ENCODE measurements at regions of chr6 and their contacts with region 1.

Region 1: GRCh38 chr6:87701676-87702588 is at the start of gene AKIRIN2:
- DNase-seq: peak; percentile 67 to 98
- ATAC-seq: peak; percentile 72 to 85
- H3K4me3 ChIP-seq: peak within 1 kb of the TSS; percentile 80
- H3K27ac ChIP-seq: peak within 1 kb of the TSS; percentile 94 to 100
- H3K4me1 ChIP-seq: peaks cover 53% of the 10 kb centered on the region
- CTCF ChIP-seq: no peak
- EP300 ChIP-seq: no peak
- POLR2A ChIP-seq: peak; percentile 78
- RAD21 ChIP-seq: no peak
- polyA plus RNA-seq, gene AKIRIN2: 23.7 and 28.8 TPM in 2 replicates

Region 2: GRCh38 chr6:87421575-87421974 is 280.4 kb before region 1 on chr6:
- CTCF ChIA-PET with region 1: no interaction called
- POLR2A ChIA-PET with region 1: no interaction called
- DNase-seq: no peak
- ATAC-seq: no peak
- H3K4me3 ChIP-seq: no peak overlapping the region
- H3K27ac ChIP-seq: no peak overlapping the region
- H3K4me1 ChIP-seq: no peaks in the 10 kb centered on the region
- CTCF ChIP-seq: no peak
- EP300 ChIP-seq: no peak
- POLR2A ChIP-seq: no peak
- RAD21 ChIP-seq: no peak

Region 3: DNA sequence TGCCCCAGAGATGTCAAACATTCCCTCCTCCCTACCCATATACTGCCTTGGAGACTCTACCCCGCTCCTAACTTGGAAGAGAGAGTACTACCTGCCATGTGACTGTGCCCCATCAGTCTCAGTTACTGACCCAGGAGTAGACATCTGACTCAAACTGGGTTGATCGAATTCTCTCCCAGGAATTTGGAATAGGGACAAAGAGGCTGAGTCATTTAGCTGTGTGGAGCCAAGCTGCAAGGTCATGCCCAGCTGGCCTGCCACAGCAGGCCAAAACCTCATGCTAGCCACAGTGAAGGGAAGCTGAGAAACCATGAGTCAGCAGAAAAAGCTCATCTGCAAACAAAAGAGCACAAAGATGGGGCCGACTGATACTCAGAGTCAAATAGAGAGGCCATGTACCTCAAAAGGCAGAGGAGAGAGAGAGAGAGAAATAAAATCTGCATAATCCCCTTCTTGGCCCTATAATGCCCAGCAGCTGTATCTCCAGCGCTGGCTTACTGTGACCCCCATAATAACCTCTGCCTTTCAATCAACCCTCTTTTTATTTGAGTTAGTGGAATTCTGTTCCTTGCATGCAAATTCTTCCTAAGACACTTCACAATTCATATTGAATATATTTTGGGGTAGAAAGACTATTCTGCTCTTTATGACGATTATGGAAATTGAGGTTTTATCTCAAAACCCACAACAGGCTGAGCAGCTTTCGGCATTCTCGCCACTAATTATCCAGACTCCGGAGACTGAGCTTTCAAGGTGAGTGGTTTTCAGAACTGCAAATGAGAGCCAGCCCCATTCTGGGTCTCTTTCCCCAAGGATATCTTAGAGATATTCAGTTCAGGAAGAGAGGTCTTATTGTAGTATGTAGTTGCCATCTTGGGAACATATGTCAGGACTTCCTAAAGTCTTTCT is 21.5 kb after region 1 on chr6:
- CTCF ChIA-PET with region 1: interaction called, 5 read pairs
- POLR2A ChIA-PET with region 1: interaction called, 14 read pairs
- DNase-seq: peak; percentile 78 to 94
- ATAC-seq: peak; percentile 93 to 97
- H3K4me3 ChIP-seq: no peak overlapping the region
- H3K27ac ChIP-seq: peak overlapping the region; percentile 93
- H3K4me1 ChIP-seq: peaks cover 61% of the 10 kb centered on the region
- CTCF ChIP-seq: no peak
- EP300 ChIP-seq: peak; percentile 72 to 83; a peak in 2 of 5 replicates
- POLR2A ChIP-seq: no peak
- RAD21 ChIP-seq: peak in 1 of 2 experiments; percentile 45; a peak in 3 of 5 replicates

Region 4: GRCh38 chr6:87755708-87756671 is 54.1 kb after region 1 on chr6:
- CTCF ChIA-PET with region 1: no interaction called
- POLR2A ChIA-PET with region 1: no interaction called
- DNase-seq: no peak
- ATAC-seq: peak in 1 of 2 experiments; percentile 52; a peak in 2 of 6 replicates
- H3K4me3 ChIP-seq: no peak overlapping the region
- H3K27ac ChIP-seq: peak overlapping the region in 1 of 2 experiments; percentile 52; a peak in 3 of 6 replicates
- H3K4me1 ChIP-seq: 0 out of 3 replicates have a peak, but pooled peaks cover 4% of the 10 kb centered on the region
- CTCF ChIP-seq: no peak
- EP300 ChIP-seq: no peak
- POLR2A ChIP-seq: no peak
- RAD21 ChIP-seq: no peak

Region 5: GRCh38 chr6:87817183-87817582 is 115.3 kb after region 1 on chr6:
- CTCF ChIA-PET with region 1: no interaction called
- POLR2A ChIA-PET with region 1: no interaction called
- DNase-seq: no peak
- ATAC-seq: no peak
- H3K4me3 ChIP-seq: no peak overlapping the region
- H3K27ac ChIP-seq: 0 out of 6 replicates have a peak overlapping the region, but pooled peaks of 1 of the 2 experiments have one; percentile 39
- H3K4me1 ChIP-seq: peaks cover 18% of the 10 kb centered on the region
- CTCF ChIP-seq: no peak
- EP300 ChIP-seq: no peak
- POLR2A ChIP-seq: no peak
- RAD21 ChIP-seq: no peak